Tibial artery (tissue), 4 donors: ENCODE measurements at regions of chr10 and their contacts with region 1.

Region 1: DNA sequence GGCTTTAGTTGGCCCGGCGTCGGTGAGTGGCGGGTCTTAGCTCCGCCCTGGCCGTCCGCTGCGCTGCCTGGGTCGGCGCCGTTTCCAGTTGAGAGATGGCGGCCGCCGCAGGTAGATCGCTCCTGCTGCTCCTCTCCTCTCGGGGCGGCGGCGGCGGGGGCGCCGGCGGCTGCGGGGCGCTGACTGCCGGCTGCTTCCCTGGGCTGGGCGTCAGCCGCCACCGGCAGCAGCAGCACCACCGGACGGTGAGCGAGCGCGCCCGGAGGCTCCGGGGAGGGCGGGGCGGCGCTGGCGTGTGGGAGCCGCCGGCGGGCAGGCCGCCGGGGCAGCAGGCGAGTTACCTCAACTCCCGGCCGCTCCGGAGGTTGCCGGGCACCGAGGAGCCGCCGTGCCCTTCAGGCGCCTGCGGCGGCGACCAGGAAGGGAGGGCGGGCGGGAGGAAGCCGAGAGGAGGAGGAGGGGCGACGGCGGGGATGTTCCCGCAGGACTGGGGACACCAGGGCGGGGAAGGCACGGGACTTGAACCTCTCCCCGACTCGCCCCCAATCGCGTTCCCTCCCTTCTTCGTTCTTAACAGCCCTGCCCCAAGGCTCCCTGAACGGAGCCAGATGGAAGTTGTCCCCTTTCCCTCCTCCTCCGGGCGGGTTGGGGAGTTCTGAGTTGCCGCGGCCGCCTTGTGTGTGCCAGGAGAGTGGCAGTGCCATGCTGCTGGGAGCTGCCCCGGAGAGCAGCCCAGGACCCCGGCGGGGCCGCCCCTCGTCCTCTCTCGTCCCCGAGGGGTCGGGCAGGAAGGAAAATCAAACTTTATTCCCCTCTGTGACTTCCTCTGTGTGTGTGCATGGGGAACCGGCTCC is at the start of gene MCU:
- DNase-seq: peak; percentile 96 to 97
- H3K4me3 ChIP-seq: peak within 1 kb of the TSS; percentile 66 to 68
- H3K27ac ChIP-seq: peak within 1 kb of the TSS; percentile 91 to 97
- H3K4me1 ChIP-seq: peaks cover 0 to 49% (median 17%) of the 10 kb centered on the region in 4 donors
- H3K27me3 ChIP-seq: no peaks in the 10 kb centered on the region
- CTCF ChIP-seq: peak in 1 of 2 experiments; percentile 11

Region 2: DNA sequence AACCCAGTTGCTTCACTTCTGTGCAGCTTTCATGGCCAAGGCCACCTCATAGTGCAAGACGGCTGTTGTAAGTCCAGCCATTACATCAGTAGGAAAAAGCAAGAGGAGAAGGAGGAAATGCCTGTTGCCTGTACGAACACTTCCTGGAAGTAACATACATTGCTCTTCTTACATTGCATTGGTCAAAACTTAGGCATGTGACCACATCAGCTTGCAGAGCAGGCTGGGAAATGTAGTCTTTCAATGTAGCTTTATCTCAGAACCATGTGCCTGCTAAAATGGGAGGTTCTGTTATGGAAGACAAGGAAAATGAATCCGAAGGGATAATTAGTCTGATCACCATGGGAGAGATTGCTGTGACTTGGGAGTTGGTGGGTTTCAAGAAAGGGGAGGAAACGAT is 1368.9 kb before region 1 on chr10:
- intact Hi-C with region 1: no loop called
- DNase-seq: no peak
- H3K4me3 ChIP-seq: no peak overlapping the region
- H3K27ac ChIP-seq: no peak overlapping the region
- H3K4me1 ChIP-seq: peaks cover 0 to 18% (median 12%) of the 10 kb centered on the region in 4 donors
- H3K27me3 ChIP-seq: no peaks in the 10 kb centered on the region
- CTCF ChIP-seq: no peak

Region 3: GRCh38 chr10:72593963-72594362 is 98.3 kb before region 1 on chr10:
- intact Hi-C with region 1: no loop called
- DNase-seq: no peak
- H3K4me3 ChIP-seq: no peak overlapping the region
- H3K27ac ChIP-seq: no peak overlapping the region
- H3K4me1 ChIP-seq: no peaks in the 10 kb centered on the region
- H3K27me3 ChIP-seq: no peaks in the 10 kb centered on the region
- CTCF ChIP-seq: no peak

Region 4: DNA sequence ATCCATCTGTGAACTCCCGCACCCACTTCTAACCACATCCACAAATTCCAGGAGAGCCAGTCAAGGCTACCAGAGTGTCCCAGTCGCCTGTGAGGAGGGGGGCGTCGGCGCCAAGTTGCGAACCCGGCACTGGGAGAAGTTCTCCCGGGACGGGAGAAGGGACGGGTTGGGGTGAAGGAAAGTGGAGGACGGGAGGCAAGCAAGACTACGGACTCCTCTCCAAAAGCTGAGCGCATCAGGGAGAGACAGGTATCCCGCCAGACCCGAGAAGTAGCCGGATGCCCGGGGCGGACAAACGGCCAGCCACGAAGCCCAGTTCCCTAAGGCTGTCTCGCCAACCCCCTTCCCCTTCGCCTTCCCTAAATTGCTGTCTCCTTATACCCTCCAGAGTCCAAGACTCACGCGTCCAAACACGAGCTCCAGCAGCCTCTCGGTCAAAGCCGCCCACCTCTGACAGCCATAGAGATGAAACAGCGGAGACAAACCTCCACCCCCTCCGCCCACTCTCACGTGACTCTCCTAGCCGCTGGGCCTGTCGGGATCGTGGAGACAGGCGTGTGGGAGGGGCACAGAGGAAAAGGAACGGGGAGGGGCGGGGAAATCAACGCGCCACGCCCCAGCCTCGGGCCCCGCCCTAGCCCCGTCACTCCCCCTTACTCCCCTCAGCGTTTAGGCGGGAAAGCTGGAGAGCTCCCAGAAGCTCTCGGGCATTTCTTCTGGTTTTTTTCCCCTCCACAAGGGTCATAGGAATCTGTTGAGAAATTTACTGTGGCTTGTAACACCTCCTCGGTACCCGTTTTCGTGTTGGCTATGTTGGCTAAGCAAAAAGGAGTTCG is 66.5 kb before region 1 on chr10 and contains the start of gene MICU1:
- intact Hi-C with region 1: loop called (anchors 10 kb)
- DNase-seq: peak; percentile 97 to 98
- H3K4me3 ChIP-seq: peak within 1 kb of the TSS; percentile 56 to 68
- H3K27ac ChIP-seq: peak within 1 kb of the TSS; percentile 76 to 85
- H3K4me1 ChIP-seq: peaks cover 0 to 18% (median 9%) of the 10 kb centered on the region in 4 donors
- H3K27me3 ChIP-seq: no peaks in the 10 kb centered on the region
- CTCF ChIP-seq: no peak

Region 5: GRCh38 chr10:72834183-72834825 is 142.0 kb after region 1 on chr10:
- intact Hi-C with region 1: loop called (anchors 2 kb)
- DNase-seq: peak in 1 of 2 donors; percentile 48
- H3K4me3 ChIP-seq: no peak overlapping the region
- H3K27ac ChIP-seq: no peak overlapping the region
- H3K4me1 ChIP-seq: peaks cover 0 to 39% (median 6%) of the 10 kb centered on the region in 4 donors
- H3K27me3 ChIP-seq: no peaks in the 10 kb centered on the region
- CTCF ChIP-seq: peak; percentile 61 to 85